ENCODE measurements at regions of chr1 and their contacts with region 1.

Region 1: GRCh38 chr1:28088168-28088961 is at the start of gene EYA3:
- DNase-seq: peak; percentile 100
- H3K4me3 Mint-ChIP-seq: peak within 1 kb of the TSS; percentile 99
- H3K27ac Mint-ChIP-seq: peak within 1 kb of the TSS; percentile 95
- H3K4me1 Mint-ChIP-seq: peaks cover 35% of the 10 kb centered on the region
- H3K27me3 Mint-ChIP-seq: peaks cover 5% of the 10 kb centered on the region
- total RNA-seq, gene EYA3: 32.2 and 35.5 TPM in 2 replicates

Region 2: GRCh38 chr1:27772933-27773825 is 315.2 kb before region 1 on chr1 and contains the start of gene STX12:
- intact Hi-C with region 1: loop called (anchors 1 kb)
- DNase-seq: peak; percentile 99
- H3K4me3 Mint-ChIP-seq: peak within 1 kb of the TSS; percentile 98
- H3K27ac Mint-ChIP-seq: peak within 1 kb of the TSS; percentile 98
- H3K4me1 Mint-ChIP-seq: peaks cover 31% of the 10 kb centered on the region
- H3K27me3 Mint-ChIP-seq: no peaks in the 10 kb centered on the region
- total RNA-seq, gene STX12: 22.0 and 23.9 TPM in 2 replicates

Region 3: GRCh38 chr1:27992276-27992675 is 96.1 kb before region 1 on chr1:
- intact Hi-C with region 1: loop called (anchors 2 kb)
- DNase-seq: peak; percentile 36
- H3K4me3 Mint-ChIP-seq: peak overlapping the region; percentile 37
- H3K27ac Mint-ChIP-seq: peak overlapping the region; percentile 67
- H3K4me1 Mint-ChIP-seq: peaks cover 50% of the 10 kb centered on the region
- H3K27me3 Mint-ChIP-seq: no peaks in the 10 kb centered on the region

Region 4: DNA sequence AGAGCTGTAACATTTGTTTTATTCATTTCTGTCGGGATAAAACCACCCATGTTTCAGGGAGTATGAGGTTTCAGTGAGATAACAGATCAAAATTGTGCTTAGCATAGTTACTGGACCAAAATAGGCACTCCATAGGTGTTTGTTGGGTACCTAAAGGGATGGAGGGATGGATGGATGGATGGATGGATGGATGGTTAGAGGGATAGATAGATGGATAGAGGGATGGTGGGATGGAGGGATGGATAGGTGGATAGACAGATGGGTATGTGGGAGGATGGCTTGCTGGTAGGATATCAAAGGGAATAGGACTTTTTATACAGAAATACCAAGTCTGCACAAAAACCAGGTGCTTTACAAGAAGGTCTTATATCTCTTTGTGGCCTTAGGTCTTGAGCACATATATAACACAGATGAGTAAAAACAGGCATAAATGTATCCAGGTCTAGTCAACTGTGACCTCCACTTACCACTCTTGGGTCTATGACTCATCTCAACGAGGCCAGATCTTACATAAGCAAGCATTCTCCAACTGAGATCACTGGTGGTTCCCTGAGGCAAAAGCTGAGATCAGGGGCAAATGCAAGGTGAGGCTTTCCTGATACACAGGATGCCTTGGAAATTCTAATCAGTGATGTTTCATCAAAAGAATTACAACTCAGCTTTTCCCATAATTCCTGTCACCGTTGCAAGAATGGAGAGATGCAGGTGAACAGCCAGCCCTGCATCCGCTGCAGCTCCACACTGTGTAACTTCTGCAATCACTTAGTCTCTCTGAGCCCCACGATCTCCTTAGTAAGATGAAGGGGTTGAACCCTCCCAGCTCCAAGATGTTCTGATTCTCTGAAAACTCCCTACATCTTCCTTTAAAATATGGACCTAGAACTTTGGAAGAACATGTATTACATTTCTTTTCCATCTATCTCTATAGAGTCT is 56.1 kb after region 1 on chr1:
- intact Hi-C with region 1: loop called (anchors 2 kb)
- DNase-seq: peak; percentile 30
- H3K4me3 Mint-ChIP-seq: no peak overlapping the region
- H3K27ac Mint-ChIP-seq: no peak overlapping the region
- H3K4me1 Mint-ChIP-seq: peaks cover 26% of the 10 kb centered on the region
- H3K27me3 Mint-ChIP-seq: peaks cover 36% of the 10 kb centered on the region

Region 5: DNA sequence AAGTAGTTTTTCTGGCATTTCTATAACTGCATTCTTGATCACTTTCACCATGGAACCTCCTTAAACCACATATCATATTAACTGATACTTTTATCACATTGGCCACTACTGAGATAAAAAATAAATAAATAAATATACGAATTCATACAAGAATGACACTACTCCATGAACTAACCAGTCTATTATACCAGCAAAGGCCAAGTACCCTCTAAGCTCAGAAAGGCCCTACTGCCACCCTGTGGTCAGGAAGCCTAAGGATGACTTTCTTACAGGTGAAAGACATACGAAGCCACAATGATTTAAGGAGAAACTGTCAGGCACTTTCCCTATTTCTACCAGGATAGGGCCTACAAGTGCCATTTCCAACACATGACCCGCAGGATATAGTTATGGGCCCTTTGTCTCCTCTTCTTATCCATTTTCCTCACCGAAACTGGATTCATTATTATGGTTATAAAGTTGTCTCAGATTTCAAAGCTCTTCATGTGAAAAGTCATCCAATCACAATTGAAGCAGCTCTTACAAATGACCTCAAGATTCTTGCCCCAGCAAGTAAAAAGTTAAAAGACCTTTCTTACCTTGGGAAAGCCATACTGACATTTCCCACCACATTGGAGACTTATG is 120.6 kb after region 1 on chr1:
- intact Hi-C with region 1: loop called (anchors 1 kb)
- DNase-seq: peak; percentile 49
- H3K4me3 Mint-ChIP-seq: no peak overlapping the region
- H3K27ac Mint-ChIP-seq: no peak overlapping the region
- H3K4me1 Mint-ChIP-seq: peaks cover 19% of the 10 kb centered on the region
- H3K27me3 Mint-ChIP-seq: no peaks in the 10 kb centered on the region

Region 6: GRCh38 chr1:28280501-28280900 is 192.1 kb after region 1 on chr1:
- intact Hi-C with region 1: no loop called
- DNase-seq: no peak
- H3K4me3 Mint-ChIP-seq: no peak overlapping the region
- H3K27ac Mint-ChIP-seq: no peak overlapping the region
- H3K4me1 Mint-ChIP-seq: peaks cover 8% of the 10 kb centered on the region
- H3K27me3 Mint-ChIP-seq: no peaks in the 10 kb centered on the region

Region 7: GRCh38 chr1:28642847-28643635 is 554.7 kb after region 1 on chr1 and contains the start of gene TAF12:
- intact Hi-C with region 1: loop called (anchors 10 kb)
- DNase-seq: peak; percentile 85
- H3K4me3 Mint-ChIP-seq: peak within 1 kb of the TSS; percentile 99
- H3K27ac Mint-ChIP-seq: peak within 1 kb of the TSS; percentile 99
- H3K4me1 Mint-ChIP-seq: peaks cover 55% of the 10 kb centered on the region
- H3K27me3 Mint-ChIP-seq: no peaks in the 10 kb centered on the region
- total RNA-seq, gene TAF12: 32.8 and 33.9 TPM in 2 replicates